A549 (cell line): ENCODE measurements at regions of chr12 and their contacts with region 1.

Region 1: GRCh38 chr12:48890657-48891418 is 25.2 kb upstream of the RND1 start:
- DNase-seq: peak in 1 of 2 experiments; percentile 80
- ATAC-seq: peak; percentile 97 to 98
- H3K4me3 ChIP-seq: peak overlapping the region; percentile 38
- H3K27ac ChIP-seq: peak overlapping the region; percentile 51 to 76
- H3K4me1 ChIP-seq: peaks cover 24% of the 10 kb centered on the region
- CTCF ChIP-seq: peak; percentile 94
- EP300 ChIP-seq: no peak
- POLR2A ChIP-seq: no peak
- RAD21 ChIP-seq: peak; percentile 98 to 99

Region 2: DNA sequence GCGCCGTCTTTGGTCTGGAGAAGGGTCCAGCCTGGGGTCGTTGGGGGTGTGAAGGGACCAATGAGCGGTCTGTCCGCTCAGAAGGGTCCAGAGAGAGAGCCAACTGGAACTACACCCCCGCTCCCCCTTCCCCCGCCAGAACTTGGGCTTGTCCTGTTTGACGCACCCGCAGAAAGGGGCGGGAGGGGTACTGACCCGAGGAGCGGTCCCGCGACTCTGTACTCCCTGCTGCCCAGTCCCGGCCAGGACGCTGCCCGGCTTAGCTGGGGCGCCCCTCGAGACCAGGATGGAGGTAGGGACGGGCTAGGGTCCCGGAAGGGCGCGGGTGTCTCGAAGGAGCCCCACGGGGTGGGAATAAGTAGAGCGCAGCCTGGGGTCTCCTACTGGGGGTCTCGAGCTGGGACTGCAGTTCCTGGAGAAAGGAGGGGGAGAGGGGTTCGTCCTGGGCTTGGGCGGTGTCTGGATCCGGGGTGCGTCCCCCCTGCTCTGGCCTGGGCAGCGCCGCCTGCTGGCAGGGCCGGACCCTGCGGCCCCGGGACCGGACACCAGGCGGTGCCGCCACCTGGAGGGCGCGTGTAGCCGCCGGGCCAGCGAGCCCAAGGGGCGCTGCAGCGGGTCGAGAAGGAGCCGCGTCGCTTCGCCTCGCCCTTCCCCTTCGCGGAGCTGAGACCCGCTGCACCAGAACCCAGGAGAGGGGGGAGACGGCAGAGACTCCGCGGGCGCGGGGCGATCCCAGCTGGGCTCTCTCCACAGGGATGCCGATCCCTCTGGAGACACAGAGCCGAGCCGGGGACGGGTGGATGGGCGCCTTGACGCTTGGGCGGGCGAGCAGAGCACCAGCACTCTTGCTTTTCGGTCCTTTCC is 76.3 kb before region 1 on chr12:
- CTCF ChIA-PET with region 1: interaction called, 21 read pairs
- POLR2A ChIA-PET with region 1: no interaction called
- DNase-seq: peak; percentile 82 to 87
- ATAC-seq: peak; percentile 69 to 84
- H3K4me3 ChIP-seq: peak overlapping the region; percentile 81
- H3K27ac ChIP-seq: peak overlapping the region; percentile 93 to 95
- H3K4me1 ChIP-seq: peaks cover 48% of the 10 kb centered on the region
- CTCF ChIP-seq: peak; percentile 99
- EP300 ChIP-seq: no peak
- POLR2A ChIP-seq: peak; percentile 46
- RAD21 ChIP-seq: peak; percentile 43 to 62; a peak in 4 of 5 replicates

Region 3: DNA sequence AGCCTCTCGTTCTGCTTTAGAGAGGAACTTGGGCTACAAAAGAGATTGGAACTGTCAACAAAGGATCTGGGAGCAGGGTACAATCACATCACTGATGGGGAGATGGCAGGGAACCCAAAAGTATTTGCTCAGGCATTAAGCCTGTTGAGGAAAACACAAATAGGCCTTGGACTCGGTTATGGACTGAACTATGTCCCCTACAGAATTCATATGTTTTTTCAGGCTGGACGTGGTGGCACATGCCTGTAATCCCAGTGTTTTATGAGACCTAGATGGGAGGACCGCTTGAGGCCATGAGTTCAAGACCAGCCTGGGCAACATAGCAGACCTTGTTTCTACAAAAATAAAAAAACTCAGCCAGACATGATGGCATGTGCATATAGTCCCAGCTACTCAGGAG is 52.8 kb before region 1 on chr12:
- CTCF ChIA-PET with region 1: interaction called, 15 read pairs
- POLR2A ChIA-PET with region 1: interaction called, 4 read pairs
- DNase-seq: no peak
- ATAC-seq: no peak
- H3K4me3 ChIP-seq: no peak overlapping the region
- H3K27ac ChIP-seq: no peak overlapping the region
- H3K4me1 ChIP-seq: no peaks in the 10 kb centered on the region
- CTCF ChIP-seq: no peak
- EP300 ChIP-seq: no peak
- POLR2A ChIP-seq: no peak
- RAD21 ChIP-seq: no peak

Region 4: GRCh38 chr12:48903982-48904411 is 13.2 kb after region 1 on chr12:
- CTCF ChIA-PET with region 1: interaction called, 107 read pairs
- POLR2A ChIA-PET with region 1: no interaction called
- DNase-seq: peak; percentile 92 to 93
- ATAC-seq: peak; percentile 96 to 98
- H3K4me3 ChIP-seq: peak overlapping the region; percentile 52
- H3K27ac ChIP-seq: peak overlapping the region in 1 of 2 experiments; percentile 72; a peak in 3 of 6 replicates
- H3K4me1 ChIP-seq: peaks cover 14% of the 10 kb centered on the region; the same call in 2 of the 3 replicates
- CTCF ChIP-seq: peak; percentile 90
- EP300 ChIP-seq: no peak
- POLR2A ChIP-seq: no peak
- RAD21 ChIP-seq: peak in 1 of 2 experiments; percentile 10; a peak in 1 of 5 replicates

Region 5: DNA sequence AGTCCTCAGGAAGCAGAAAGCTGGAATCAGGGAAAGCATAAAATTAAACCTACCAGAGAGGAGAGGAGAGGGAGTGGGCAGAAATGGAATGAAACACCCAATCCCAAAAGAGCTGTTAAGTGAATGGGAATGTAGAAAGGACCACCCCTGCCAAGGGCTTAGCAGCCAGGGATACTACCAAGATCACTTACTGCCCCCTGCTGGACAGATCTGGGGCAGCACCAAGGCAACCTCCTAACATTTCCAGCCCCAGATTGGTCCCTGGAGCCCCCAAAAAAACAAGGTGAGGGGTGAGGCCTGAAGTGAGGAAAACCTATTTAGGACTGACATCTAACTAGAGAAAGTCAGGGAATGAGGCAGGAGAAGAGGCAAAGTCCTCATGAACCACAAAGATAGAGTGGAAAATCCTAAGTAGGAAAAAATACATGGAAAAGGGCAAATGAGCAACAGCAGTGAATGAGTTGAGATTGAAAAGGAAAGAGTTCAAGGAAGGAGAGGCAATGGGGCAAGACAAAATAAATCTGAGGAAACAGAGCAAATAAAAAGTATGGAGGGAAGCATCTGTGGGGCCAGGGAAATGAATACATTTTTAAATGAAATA is 45.6 kb after region 1 on chr12:
- CTCF ChIA-PET with region 1: interaction called, 35 read pairs
- POLR2A ChIA-PET with region 1: no interaction called
- DNase-seq: peak; percentile 72 to 95
- ATAC-seq: peak; percentile 87 to 91
- H3K4me3 ChIP-seq: no peak overlapping the region
- H3K27ac ChIP-seq: no peak overlapping the region
- H3K4me1 ChIP-seq: no peaks in the 10 kb centered on the region
- CTCF ChIP-seq: peak; percentile 88
- EP300 ChIP-seq: no peak
- POLR2A ChIP-seq: no peak
- RAD21 ChIP-seq: peak; percentile 68 to 70

Region 6: GRCh38 chr12:48995061-48995879 is 104.4 kb after region 1 on chr12:
- CTCF ChIA-PET with region 1: interaction called, 10 read pairs
- POLR2A ChIA-PET with region 1: no interaction called
- DNase-seq: peak; percentile 89 to 99
- ATAC-seq: peak; percentile 65 to 76
- H3K4me3 ChIP-seq: peak overlapping the region; percentile 32
- H3K27ac ChIP-seq: peak overlapping the region; percentile 32 to 56; a peak in 3 of 6 replicates
- H3K4me1 ChIP-seq: peaks cover 18% of the 10 kb centered on the region
- CTCF ChIP-seq: peak; percentile 66
- EP300 ChIP-seq: no peak
- POLR2A ChIP-seq: no peak
- RAD21 ChIP-seq: peak; percentile 81 to 83